ENCODE measurements at regions of chr2 and their contacts with region 1.

Region 1: GRCh38 chr2:191165176-191165643 is 14.4 kb upstream of the STAT4 start:
- DNase-seq: peak in 4 of 5 donors; percentile 45 to 57 (median 48)
- H3K4me3 ChIP-seq: no peak overlapping the region
- H3K4me3 Mint-ChIP-seq: no peak overlapping the region
- H3K27ac ChIP-seq: no peak overlapping the region
- H3K27ac Mint-ChIP-seq: peak overlapping the region in 2 of 7 donors; percentile 54 to 77
- H3K4me1 ChIP-seq: no peaks in the 10 kb centered on the region
- H3K4me1 Mint-ChIP-seq: peaks cover 5 to 6% (median 6%) of the 10 kb centered on the region in 4 donors
- H3K27me3 ChIP-seq: no peaks in the 10 kb centered on the region
- H3K27me3 Mint-ChIP-seq: peaks cover 0 to under 1% of the 10 kb centered on the region in 2 donors

Region 2: GRCh38 chr2:191302459-191303139 is 137.4 kb after region 1 on chr2:
- CTCF ChIA-PET with region 1: interaction called, 4 read pairs
- POLR2A ChIA-PET with region 1: no interaction called
- intact Hi-C with region 1: loop called (anchors 1 kb)
- DNase-seq: peak in 2 of 5 donors; percentile 3 to 4
- H3K4me3 ChIP-seq: no peak overlapping the region
- H3K4me3 Mint-ChIP-seq: no peak overlapping the region
- H3K27ac ChIP-seq: no peak overlapping the region
- H3K27ac Mint-ChIP-seq: no peak overlapping the region
- H3K4me1 ChIP-seq: no peaks in the 10 kb centered on the region
- H3K4me1 Mint-ChIP-seq: peaks cover 0 to 2% (median under 1%) of the 10 kb centered on the region in 4 donors
- H3K27me3 ChIP-seq: no peaks in the 10 kb centered on the region
- H3K27me3 Mint-ChIP-seq: peaks cover 0 to 8% of the 10 kb centered on the region in 2 donors

Region 3: DNA sequence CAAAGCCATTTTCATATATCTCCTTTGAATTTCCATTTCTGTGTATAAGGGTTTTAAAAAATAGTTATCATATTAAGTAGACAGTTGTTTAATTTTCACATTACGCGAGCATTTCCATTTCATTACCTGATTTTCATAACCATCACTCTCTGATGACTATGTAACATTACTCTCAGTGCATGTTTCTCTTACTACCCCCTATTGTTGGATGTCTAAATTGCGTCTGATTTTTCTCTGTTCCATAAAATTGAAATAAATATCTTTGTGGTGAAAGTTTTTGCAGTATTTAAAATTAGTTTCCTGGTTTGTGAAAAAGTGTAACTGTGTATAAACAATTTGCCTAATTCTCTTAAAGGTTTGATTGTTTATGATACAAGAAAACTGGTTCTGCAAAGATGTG is 203.8 kb after region 1 on chr2:
- CTCF ChIA-PET with region 1: no interaction called
- POLR2A ChIA-PET with region 1: no interaction called
- intact Hi-C with region 1: loop called (anchors 1 kb)
- DNase-seq: peak in 1 of 5 donors; percentile 1
- H3K4me3 ChIP-seq: no peak overlapping the region
- H3K4me3 Mint-ChIP-seq: no peak overlapping the region
- H3K27ac ChIP-seq: no peak overlapping the region
- H3K27ac Mint-ChIP-seq: no peak overlapping the region
- H3K4me1 ChIP-seq: no peaks in the 10 kb centered on the region
- H3K4me1 Mint-ChIP-seq: no peaks in the 10 kb centered on the region
- H3K27me3 ChIP-seq: no peaks in the 10 kb centered on the region
- H3K27me3 Mint-ChIP-seq: no peaks in the 10 kb centered on the region

Region 4: DNA sequence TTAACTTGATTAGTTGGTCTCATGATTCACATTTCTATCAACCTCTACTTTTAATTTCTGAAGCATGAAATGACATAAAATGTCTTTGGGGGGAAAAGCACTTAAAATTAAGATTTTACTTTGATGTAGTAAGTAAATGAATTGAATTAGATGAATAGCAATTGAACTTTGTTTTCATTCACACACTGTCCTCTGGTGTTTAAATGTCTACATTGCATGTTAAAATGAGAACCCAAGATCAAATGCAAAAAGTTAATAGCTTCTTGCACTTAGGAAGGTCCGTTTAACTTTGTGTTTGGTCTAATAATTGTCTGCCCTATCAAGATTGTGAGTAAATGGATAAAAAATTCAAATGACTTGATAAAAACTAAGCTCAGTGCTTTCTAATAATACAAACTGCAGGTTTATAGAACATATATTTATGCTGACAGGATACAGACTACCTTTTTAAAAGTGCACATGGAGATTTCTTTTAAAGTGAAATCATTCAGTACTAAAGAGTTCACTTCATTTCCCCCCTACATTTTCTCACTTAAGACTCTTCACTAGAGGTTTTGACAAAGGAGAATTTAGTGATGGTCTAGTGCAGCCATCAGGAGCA is 356.5 kb after region 1 on chr2:
- CTCF ChIA-PET with region 1: interaction called, 84 read pairs
- POLR2A ChIA-PET with region 1: no interaction called
- intact Hi-C with region 1: loop called (anchors 1 kb)
- DNase-seq: peak in 4 of 5 donors; percentile 20 to 37 (median 24)
- H3K4me3 ChIP-seq: no peak overlapping the region
- H3K4me3 Mint-ChIP-seq: no peak overlapping the region
- H3K27ac ChIP-seq: no peak overlapping the region
- H3K27ac Mint-ChIP-seq: no peak overlapping the region
- H3K4me1 ChIP-seq: no peaks in the 10 kb centered on the region
- H3K4me1 Mint-ChIP-seq: no peaks in the 10 kb centered on the region
- H3K27me3 ChIP-seq: no peaks in the 10 kb centered on the region
- H3K27me3 Mint-ChIP-seq: peaks cover 4 to 5% of the 10 kb centered on the region in 2 donors

Region 5: DNA sequence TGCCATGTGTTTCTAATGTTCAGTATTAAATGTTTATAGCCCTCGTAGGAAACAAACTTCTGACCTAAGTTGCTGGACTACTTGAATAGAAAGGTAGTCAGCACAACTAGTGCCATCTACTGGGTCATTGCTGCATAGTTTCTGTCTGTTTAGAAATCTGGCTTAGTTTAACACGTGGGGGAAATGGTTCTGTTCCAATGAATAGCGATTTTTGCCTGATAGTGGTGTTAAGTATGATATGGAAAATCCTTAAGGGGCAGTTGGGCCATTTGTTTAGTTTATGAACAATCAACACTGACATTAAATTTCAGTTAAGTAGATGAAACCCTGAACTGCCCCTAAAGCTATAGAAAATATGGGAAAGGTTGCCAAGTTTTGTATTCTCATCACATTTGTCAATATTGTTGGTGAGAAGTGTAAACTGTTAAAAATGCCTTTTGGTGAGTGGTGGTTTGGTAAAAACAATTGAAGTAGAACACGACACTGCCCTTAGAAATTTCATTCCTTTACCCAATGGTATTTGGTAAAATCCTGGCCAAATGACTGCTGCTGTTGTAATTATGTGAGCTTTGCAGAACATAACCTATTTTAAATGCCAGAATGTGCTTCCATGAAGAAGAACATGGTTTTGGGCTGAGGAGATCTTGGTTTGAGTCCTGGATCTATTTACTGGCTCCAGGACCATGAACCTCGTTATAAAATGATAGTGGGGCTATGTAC is 526.0 kb after region 1 on chr2:
- CTCF ChIA-PET with region 1: no interaction called
- POLR2A ChIA-PET with region 1: no interaction called
- intact Hi-C with region 1: loop called (anchors 2 kb)
- DNase-seq: peak; percentile 61 to 67 (median 65)
- H3K4me3 ChIP-seq: no peak overlapping the region
- H3K4me3 Mint-ChIP-seq: no peak overlapping the region
- H3K27ac ChIP-seq: no peak overlapping the region
- H3K27ac Mint-ChIP-seq: peak overlapping the region; percentile 40 to 90 (median 73)
- H3K4me1 ChIP-seq: peaks cover 30% of the 10 kb centered on the region
- H3K4me1 Mint-ChIP-seq: peaks cover 20 to 46% (median 32%) of the 10 kb centered on the region in 4 donors
- H3K27me3 ChIP-seq: no peaks in the 10 kb centered on the region
- H3K27me3 Mint-ChIP-seq: no peaks in the 10 kb centered on the region

Measured in CD4-positive, alpha-beta memory T cell (primary cell).